H1 (cell line): ENCODE measurements at regions of chr16 and their contacts with region 1.

Region 1: GRCh38 chr16:86761111-86762031 is 183.0 kb downstream of the FOXL1 start:
- DNase-seq: peak in 1 of 2 experiments; percentile 92
- H3K4me3 ChIP-seq: no peak overlapping the region
- H3K27ac ChIP-seq: no peak overlapping the region
- H3K4me1 ChIP-seq: peaks cover 1 to 8% (median 4%) of the 10 kb centered on the region in 4 experiments
- H3K27me3 ChIP-seq: peaks cover 0 to 2% (median 0%) of the 10 kb centered on the region in 4 experiments; a peak in 2 of 7 replicates
- CTCF ChIP-seq: peak; percentile 64 to 88 (median 84)
- EP300 ChIP-seq: no peak
- POLR2A ChIP-seq: no peak
- RAD21 ChIP-seq: peak; percentile 59 to 63

Region 2: GRCh38 chr16:86751076-86752030 is 10.0 kb before region 1 on chr16:
- CTCF ChIA-PET with region 1: interaction called, 24 read pairs
- POLR2A ChIA-PET with region 1: interaction called, 3 read pairs
- DNase-seq: no peak
- H3K4me3 ChIP-seq: no peak overlapping the region
- H3K27ac ChIP-seq: no peak overlapping the region
- H3K4me1 ChIP-seq: peaks cover 0 to 3% (median 1%) of the 10 kb centered on the region in 4 experiments; a peak in 2 of 7 replicates
- H3K27me3 ChIP-seq: no peaks in the 10 kb centered on the region
- CTCF ChIP-seq: no peak
- EP300 ChIP-seq: no peak
- POLR2A ChIP-seq: no peak
- RAD21 ChIP-seq: no peak

Region 3: GRCh38 chr16:86772671-86773353 is 11.4 kb after region 1 on chr16:
- CTCF ChIA-PET with region 1: interaction called, 16 read pairs
- POLR2A ChIA-PET with region 1: no interaction called
- DNase-seq: no peak
- H3K4me3 ChIP-seq: no peak overlapping the region
- H3K27ac ChIP-seq: no peak overlapping the region
- H3K4me1 ChIP-seq: no peaks in the 10 kb centered on the region; a peak in 2 of 7 replicates
- H3K27me3 ChIP-seq: no peaks in the 10 kb centered on the region; a peak in 1 of 7 replicates
- CTCF ChIP-seq: no peak
- EP300 ChIP-seq: no peak
- POLR2A ChIP-seq: no peak
- RAD21 ChIP-seq: no peak